ENCODE measurements at regions of chr18 and their contacts with region 1.

Region 1: DNA sequence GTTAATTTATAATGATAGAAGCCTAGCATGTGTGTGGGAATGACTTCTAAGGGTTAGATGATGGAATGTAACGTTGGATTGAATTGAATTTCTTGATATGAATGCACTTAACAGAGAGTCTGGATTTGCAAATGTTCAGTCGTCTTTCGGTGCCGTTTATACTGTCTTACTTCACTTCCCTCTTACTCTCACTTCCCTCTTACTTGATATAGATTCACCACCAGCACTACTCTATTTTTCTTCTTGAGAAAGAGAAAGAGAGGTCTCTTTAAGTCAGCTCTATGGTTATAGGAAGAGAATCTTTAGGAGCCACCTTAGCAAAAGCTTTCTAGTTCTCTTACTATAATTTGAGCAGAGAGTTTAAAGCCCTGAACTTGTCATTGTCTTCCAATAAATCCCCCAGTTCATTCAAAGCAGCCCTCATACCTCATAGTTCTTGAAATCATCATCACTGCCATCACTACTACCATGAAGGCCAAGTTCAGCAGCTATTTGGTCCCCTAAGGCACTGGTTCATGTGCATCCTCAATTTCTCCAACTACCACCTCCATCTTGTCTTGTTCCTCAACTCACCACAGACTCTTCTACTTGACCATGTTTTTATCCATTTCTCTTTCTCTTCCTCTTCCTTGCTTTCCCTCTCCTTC is 501.7 kb upstream of the TCF4 start:
- DNase-seq: no peak
- ATAC-seq: no peak
- H3K4me3 ChIP-seq: no peak overlapping the region
- H3K27ac ChIP-seq: no peak overlapping the region
- H3K4me1 ChIP-seq: no peaks in the 10 kb centered on the region
- H3K27me3 ChIP-seq: no peaks in the 10 kb centered on the region
- CTCF ChIP-seq: no peak
- POLR2A ChIP-seq: no peak

Region 2: GRCh38 chr18:56028514-56028913 is 61.2 kb before region 1 on chr18:
- intact Hi-C with region 1: loop called in 1 of 10 experiments (anchors 10 kb)
- DNase-seq: no peak
- ATAC-seq: peak in 1 of 4 donors; percentile 63
- H3K4me3 ChIP-seq: no peak overlapping the region
- H3K27ac ChIP-seq: no peak overlapping the region
- H3K4me1 ChIP-seq: peaks cover 0 to 12% (median 0%) of the 10 kb centered on the region in 12 donors
- H3K27me3 ChIP-seq: no peaks in the 10 kb centered on the region
- CTCF ChIP-seq: no peak
- POLR2A ChIP-seq: no peak